Panc1 (cell line): ENCODE measurements at regions of chr19 and their contacts with region 1.

Region 1: DNA sequence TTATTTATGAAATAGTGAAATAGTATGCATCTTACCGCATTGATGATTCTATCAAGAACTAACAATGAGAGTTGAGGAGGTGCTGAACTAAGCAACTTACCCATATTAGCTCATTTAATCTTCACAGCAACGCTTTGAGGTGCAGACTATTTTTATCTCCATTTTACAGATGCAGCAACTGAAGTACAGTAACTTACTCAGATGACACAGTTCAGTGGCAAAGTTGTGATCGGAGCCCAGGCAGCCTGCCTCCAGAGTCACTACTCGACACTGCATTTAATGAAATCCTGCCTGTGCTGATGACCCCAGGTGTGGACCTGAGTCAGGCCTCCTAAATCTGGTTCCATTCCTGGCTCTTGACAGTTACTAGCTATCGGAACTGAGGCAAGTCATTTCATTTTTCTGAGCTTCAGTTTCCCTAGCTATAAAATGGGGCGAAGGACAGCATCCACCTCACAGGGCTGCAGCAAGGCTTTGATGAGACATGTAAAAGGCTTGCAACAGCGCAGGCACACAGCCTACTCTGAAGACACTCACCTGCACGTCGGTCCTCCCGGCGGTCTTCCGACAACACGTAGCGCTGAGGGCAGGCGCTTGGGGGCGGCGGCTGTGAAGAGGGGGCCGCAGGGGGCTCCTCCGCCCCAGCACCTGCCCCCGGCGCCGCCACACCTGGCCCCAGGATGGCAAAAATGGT is 1.5 kb downstream of the MYPOP start:
- DNase-seq: no peak
- ATAC-seq: no peak
- H3K4me3 ChIP-seq: peak overlapping the region; percentile 70 to 82
- H3K27ac ChIP-seq: no peak overlapping the region; the same call in 1 of the 2 replicates
- H3K4me1 ChIP-seq: peaks cover 3% of the 10 kb centered on the region
- H3K27me3 ChIP-seq: no peaks in the 10 kb centered on the region
- CTCF ChIP-seq: no peak

Region 2: DNA sequence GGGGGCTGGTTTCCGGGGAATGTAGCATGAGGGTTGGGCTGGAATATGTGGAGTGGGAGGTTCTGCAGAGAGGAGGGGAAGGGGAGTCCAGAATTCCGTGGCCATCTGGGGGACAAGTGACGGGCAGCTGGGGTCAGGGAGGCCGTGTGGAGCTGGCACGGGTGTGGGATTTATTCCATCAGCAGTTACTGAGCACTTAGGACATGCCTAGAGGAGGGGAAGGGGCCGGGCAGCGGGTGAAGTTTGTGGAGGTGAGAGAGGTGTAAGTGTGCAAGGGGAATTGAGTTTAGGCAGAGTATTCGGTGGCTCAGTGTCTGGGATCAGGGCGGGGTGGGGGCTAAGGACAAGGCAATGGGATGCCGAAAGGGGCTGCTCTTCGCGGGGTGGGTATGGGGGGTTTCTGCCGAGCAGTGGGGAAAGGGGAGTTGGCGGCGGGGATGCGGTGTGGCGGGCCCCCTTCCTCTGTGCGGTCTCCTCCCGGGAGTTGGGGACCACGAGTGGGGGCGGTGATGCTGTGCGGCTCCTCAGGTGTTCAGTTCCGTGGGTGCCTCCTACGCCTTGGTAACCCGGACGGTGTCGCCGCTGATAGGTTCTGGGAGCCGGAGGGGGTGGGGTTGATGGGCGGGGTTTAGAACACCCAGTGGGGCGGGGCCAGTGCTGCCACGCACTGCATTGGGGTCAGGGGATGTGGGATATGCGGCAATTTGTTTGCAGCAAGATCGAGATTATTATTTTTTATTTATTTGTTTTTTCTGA is 99.8 kb after region 1 on chr19:
- CTCF ChIA-PET with region 1: no interaction called
- POLR2A ChIA-PET with region 1: no interaction called
- in situ Hi-C with region 1: no loop called
- intact Hi-C with region 1: no loop called
- DNase-seq: no peak
- ATAC-seq: peak; percentile 66
- H3K4me3 ChIP-seq: peak overlapping the region in 1 of 2 experiments; percentile 20; a peak in 1 of 4 replicates
- H3K27ac ChIP-seq: no peak overlapping the region
- H3K4me1 ChIP-seq: peaks cover 4% of the 10 kb centered on the region
- H3K27me3 ChIP-seq: no peaks in the 10 kb centered on the region
- CTCF ChIP-seq: no peak

Region 3: GRCh38 chr19:46014941-46015686 is 114.2 kb after region 1 on chr19:
- CTCF ChIA-PET with region 1: no interaction called
- POLR2A ChIA-PET with region 1: interaction called, 10 read pairs
- in situ Hi-C with region 1: no loop called
- intact Hi-C with region 1: no loop called
- DNase-seq: no peak
- ATAC-seq: peak; percentile 87
- H3K4me3 ChIP-seq: peak overlapping the region; percentile 32 to 47
- H3K27ac ChIP-seq: peak overlapping the region; percentile 54; the same call in 1 of the 2 replicates
- H3K4me1 ChIP-seq: peaks cover 3% of the 10 kb centered on the region; the same call in 1 of the 2 replicates
- H3K27me3 ChIP-seq: no peaks in the 10 kb centered on the region
- CTCF ChIP-seq: peak; percentile 25

Region 4: GRCh38 chr19:46035986-46036743 is 135.3 kb after region 1 on chr19:
- CTCF ChIA-PET with region 1: no interaction called
- POLR2A ChIA-PET with region 1: no interaction called
- in situ Hi-C with region 1: no loop called
- intact Hi-C with region 1: no loop called
- DNase-seq: no peak
- ATAC-seq: 0 out of 2 replicates have a peak, but pooled peaks have one; percentile 53
- H3K4me3 ChIP-seq: no peak overlapping the region
- H3K27ac ChIP-seq: no peak overlapping the region
- H3K4me1 ChIP-seq: no peaks in the 10 kb centered on the region
- H3K27me3 ChIP-seq: no peaks in the 10 kb centered on the region
- CTCF ChIP-seq: no peak